ENCODE measurements at regions of chr11 and their contacts with region 1.

Region 1: DNA sequence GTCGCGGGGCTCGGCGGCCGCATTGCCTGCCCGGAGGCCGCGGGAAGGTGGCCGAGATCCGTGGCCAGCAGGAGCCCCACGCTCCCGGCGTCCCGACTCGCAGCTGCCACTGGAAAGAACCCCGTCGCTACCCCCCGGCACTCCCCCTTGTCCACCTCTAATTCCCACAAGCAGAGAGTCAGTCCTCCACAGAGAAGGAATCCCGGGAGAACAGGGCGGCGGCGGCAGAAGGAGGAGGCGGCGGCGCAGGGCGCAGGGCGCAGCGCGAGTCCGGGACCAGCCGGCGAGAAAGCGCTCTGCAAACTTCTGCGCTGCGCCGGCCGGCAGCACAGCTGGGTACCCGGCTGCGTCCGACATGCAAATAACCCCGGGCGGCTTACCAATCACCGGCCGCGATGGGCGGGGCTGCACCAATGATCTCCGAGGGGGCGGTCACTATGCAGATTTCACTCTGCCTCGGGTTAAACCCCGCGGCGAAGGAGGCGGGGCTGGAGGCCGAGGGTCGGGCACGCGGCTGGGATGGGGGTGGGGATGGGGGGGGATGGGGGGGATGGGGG is at the start of gene ABTB2:
- DNase-seq: peak; percentile 90
- ATAC-seq: peak; percentile 89
- H3K4me3 ChIP-seq: peak within 1 kb of the TSS; percentile 56 to 68
- H3K27ac ChIP-seq: peak within 1 kb of the TSS; percentile 62
- H3K4me1 ChIP-seq: peaks cover 3 to 30% of the 10 kb centered on the region in 2 experiments; a peak in 3 of 4 replicates
- H3K27me3 ChIP-seq: no peaks in the 10 kb centered on the region
- CTCF ChIP-seq: no peak
- POLR2A ChIP-seq: peak; percentile 30
- RAD21 ChIP-seq: peak; percentile 50
- total RNA-seq, gene ABTB2: 6.8 TPM

Region 2: DNA sequence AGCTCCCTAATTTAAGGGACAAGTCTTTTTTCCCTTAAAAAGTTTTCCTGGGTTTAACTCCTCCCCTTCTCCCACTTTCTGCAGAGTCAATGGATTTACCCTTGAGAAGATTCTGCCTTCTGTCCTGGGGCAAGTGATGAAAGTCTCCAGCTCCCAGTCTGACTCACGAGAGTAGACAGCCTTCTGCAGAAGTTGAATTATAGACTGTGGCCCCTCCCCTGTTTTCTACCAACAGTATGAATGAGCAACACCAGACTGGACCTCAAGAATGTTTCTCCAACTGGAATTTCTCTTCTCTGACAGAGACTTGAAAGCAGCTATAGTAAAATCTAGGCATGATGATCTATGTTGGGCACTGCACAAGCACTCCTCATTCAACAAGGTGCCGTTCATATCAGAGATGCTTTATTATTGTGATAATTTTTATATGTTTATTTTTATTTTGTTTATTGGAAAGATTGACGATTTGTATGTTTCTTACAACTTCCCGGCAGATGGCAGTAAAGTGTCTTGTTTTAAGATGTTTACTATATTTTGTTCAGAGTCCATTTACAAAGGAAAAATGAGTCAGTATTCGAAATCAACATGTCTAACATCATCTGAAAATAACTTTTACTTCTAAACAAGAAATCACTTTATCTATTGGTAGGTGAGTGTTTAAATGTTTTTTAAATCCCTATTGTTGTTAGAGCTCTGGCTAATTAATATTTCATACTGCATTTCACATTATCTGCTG is 522.5 kb before region 1 on chr11:
- CTCF ChIA-PET with region 1: no interaction called
- POLR2A ChIA-PET with region 1: no interaction called
- RAD21 ChIA-PET with region 1: no interaction called
- intact Hi-C with region 1: loop called (anchors 1 kb)
- DNase-seq: peak; percentile 48
- ATAC-seq: peak; percentile 80
- H3K4me3 ChIP-seq: no peak overlapping the region; a peak in 1 of 4 replicates
- H3K27ac ChIP-seq: no peak overlapping the region
- H3K4me1 ChIP-seq: peaks cover 0 to 18% of the 10 kb centered on the region in 2 experiments; a peak in 2 of 4 replicates
- H3K27me3 ChIP-seq: 0 out of 2 replicates have a peak, but pooled peaks cover 3% of the 10 kb centered on the region
- CTCF ChIP-seq: peak; percentile 18 to 69 (median 36); a peak in 4 of 6 replicates
- POLR2A ChIP-seq: no peak
- RAD21 ChIP-seq: peak; percentile 75

Region 3: DNA sequence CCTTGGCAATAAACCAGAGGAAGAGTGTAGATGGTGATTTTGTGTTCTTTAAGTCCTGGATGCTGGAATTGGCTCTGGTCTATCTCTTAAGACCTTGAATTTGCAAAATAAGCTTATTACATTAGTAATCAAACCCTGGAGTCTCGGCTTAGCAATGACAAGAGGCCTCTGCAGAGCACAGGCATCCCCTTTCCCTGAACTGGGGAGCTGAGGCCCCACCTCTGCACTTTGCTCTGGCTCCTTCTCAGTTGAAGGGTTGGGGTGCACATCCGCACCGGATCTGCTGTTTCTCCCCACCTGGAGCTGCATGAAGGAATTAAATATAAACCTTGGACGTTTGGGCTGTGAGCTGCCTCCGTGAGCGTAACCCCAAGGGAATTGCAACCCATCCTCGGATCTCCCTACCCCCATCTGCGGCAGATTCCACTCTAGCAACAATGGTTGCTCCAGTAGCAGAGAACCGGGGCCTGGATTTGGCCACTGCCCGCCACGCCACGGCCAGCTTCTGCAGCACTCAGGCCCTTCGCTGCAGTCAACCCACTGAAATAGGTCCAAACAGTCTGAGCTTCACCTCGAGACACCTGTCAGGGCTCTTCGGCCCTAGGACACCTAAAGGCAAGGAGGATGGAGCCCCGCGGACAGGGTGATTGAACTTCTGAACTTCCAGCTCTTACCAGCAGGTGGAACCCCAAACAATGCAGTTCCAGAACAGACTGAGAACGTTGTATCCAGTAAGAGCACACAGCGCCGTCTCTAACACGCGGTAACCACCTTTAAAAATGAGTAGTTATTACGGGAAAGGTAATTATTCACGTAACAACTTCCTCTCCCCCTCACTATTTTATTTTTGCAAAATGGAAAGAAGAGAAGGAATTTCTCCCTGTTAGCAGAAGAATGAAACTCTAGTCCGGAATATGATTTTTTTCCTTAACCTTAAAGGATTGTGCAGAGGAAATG is 361.0 kb before region 1 on chr11:
- CTCF ChIA-PET with region 1: no interaction called
- POLR2A ChIA-PET with region 1: no interaction called
- RAD21 ChIA-PET with region 1: no interaction called
- intact Hi-C with region 1: loop called (anchors 1 kb)
- DNase-seq: peak; percentile 83
- ATAC-seq: peak; percentile 96
- H3K4me3 ChIP-seq: peak overlapping the region; percentile 22 to 47
- H3K27ac ChIP-seq: no peak overlapping the region
- H3K4me1 ChIP-seq: peaks cover 5 to 21% of the 10 kb centered on the region in 2 experiments; a peak in 3 of 4 replicates
- H3K27me3 ChIP-seq: no peaks in the 10 kb centered on the region
- CTCF ChIP-seq: peak; percentile 76 to 90 (median 79)
- POLR2A ChIP-seq: no peak
- RAD21 ChIP-seq: peak; percentile 94

Region 4: GRCh38 chr11:34174412-34175041 is 183.3 kb before region 1 on chr11:
- CTCF ChIA-PET with region 1: interaction called, 93 read pairs
- POLR2A ChIA-PET with region 1: interaction called, 22 read pairs
- RAD21 ChIA-PET with region 1: interaction called, 24 to 33 read pairs
- intact Hi-C with region 1: loop called (anchors 1 kb)
- DNase-seq: peak; percentile 45
- ATAC-seq: peak; percentile 100
- H3K4me3 ChIP-seq: no peak overlapping the region; a peak in 1 of 4 replicates
- H3K27ac ChIP-seq: no peak overlapping the region
- H3K4me1 ChIP-seq: peaks cover 2 to 12% of the 10 kb centered on the region in 2 experiments; a peak in 2 of 4 replicates
- H3K27me3 ChIP-seq: no peaks in the 10 kb centered on the region
- CTCF ChIP-seq: peak; percentile 86 to 97 (median 97)
- POLR2A ChIP-seq: no peak
- RAD21 ChIP-seq: peak; percentile 100

Region 5: GRCh38 chr11:34243726-34244464 is 113.9 kb before region 1 on chr11:
- CTCF ChIA-PET with region 1: no interaction called
- POLR2A ChIA-PET with region 1: no interaction called
- RAD21 ChIA-PET with region 1: no interaction called
- intact Hi-C with region 1: loop called (anchors 5 kb)
- DNase-seq: peak; percentile 71
- ATAC-seq: peak; percentile 83
- H3K4me3 ChIP-seq: peak overlapping the region in 1 of 2 experiments; percentile 50; a peak in 2 of 4 replicates
- H3K27ac ChIP-seq: peak overlapping the region; percentile 60; the same call in 1 of the 2 replicates
- H3K4me1 ChIP-seq: peaks cover 67 to 75% of the 10 kb centered on the region in 2 experiments
- H3K27me3 ChIP-seq: no peaks in the 10 kb centered on the region
- CTCF ChIP-seq: no peak
- POLR2A ChIP-seq: no peak
- RAD21 ChIP-seq: peak; percentile 34; the same call in 1 of the 2 replicates

Region 6: GRCh38 chr11:34327804-34328631 is 29.8 kb before region 1 on chr11:
- CTCF ChIA-PET with region 1: no interaction called
- POLR2A ChIA-PET with region 1: no interaction called
- RAD21 ChIA-PET with region 1: no interaction called
- intact Hi-C with region 1: no loop called
- DNase-seq: no peak
- ATAC-seq: no peak
- H3K4me3 ChIP-seq: no peak overlapping the region
- H3K27ac ChIP-seq: no peak overlapping the region
- H3K4me1 ChIP-seq: peaks cover 25 to 31% of the 10 kb centered on the region in 2 experiments
- H3K27me3 ChIP-seq: no peaks in the 10 kb centered on the region
- CTCF ChIP-seq: no peak
- POLR2A ChIP-seq: no peak
- RAD21 ChIP-seq: no peak

Region 7: GRCh38 chr11:34345991-34346480 is 11.7 kb before region 1 on chr11:
- CTCF ChIA-PET with region 1: interaction called, 4 read pairs
- POLR2A ChIA-PET with region 1: interaction called, 19 read pairs
- RAD21 ChIA-PET with region 1: no interaction called
- intact Hi-C with region 1: no loop called
- DNase-seq: no peak
- ATAC-seq: no peak
- H3K4me3 ChIP-seq: no peak overlapping the region
- H3K27ac ChIP-seq: no peak overlapping the region
- H3K4me1 ChIP-seq: peaks cover 47 to 61% of the 10 kb centered on the region in 2 experiments
- H3K27me3 ChIP-seq: no peaks in the 10 kb centered on the region
- CTCF ChIP-seq: no peak
- POLR2A ChIP-seq: no peak
- RAD21 ChIP-seq: no peak

Region 8: DNA sequence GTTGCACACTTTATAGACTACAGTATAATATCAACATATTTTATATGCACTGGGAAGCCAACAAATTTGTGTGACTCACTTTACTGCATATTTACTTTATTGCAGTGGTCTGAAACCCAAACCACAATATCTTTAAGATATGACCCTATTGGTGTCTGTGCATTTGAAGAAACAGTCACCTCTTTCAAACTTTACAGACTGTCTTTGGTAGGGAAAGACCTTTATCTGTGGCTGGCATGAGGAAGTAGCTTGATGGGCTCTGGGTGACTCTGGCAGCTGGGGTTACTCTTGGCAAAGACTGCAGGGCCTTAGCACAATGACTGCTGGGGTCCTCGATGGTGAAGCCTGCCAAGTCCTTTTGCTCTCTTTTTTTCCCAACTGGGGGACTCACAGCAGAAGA is 21.3 kb after region 1 on chr11:
- CTCF ChIA-PET with region 1: no interaction called
- POLR2A ChIA-PET with region 1: no interaction called
- RAD21 ChIA-PET with region 1: no interaction called
- intact Hi-C with region 1: no loop called
- DNase-seq: no peak
- ATAC-seq: peak; percentile 32; the same call in 1 of the 2 replicates
- H3K4me3 ChIP-seq: no peak overlapping the region
- H3K27ac ChIP-seq: no peak overlapping the region
- H3K4me1 ChIP-seq: peaks cover 0 to 7% of the 10 kb centered on the region in 2 experiments; a peak in 2 of 4 replicates
- H3K27me3 ChIP-seq: no peaks in the 10 kb centered on the region
- CTCF ChIP-seq: no peak
- POLR2A ChIP-seq: no peak
- RAD21 ChIP-seq: no peak